ENCODE measurements at regions of chr15 and their contacts with region 1.

Region 1: DNA sequence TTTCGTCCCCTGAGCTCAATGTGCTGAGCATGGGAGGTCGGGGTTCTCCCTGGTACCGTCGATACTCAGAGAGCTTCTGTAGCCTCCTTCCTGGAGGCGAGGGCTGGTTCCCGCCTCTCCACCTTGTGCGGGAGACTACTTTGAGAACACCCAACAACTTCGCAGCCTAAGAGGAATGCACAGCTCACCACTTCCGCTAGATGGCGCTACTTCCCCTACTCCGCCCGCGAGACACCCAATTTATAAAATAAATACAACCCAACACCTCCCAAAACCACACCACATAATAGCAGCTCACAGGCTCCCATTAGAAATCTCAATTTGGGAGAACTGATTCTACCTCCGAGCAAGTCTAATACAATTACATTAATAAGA is 1.2 kb downstream of the RGMA start:
- DNase-seq: peak; percentile 43 to 84 (median 56)
- ATAC-seq: peak; percentile 78
- H3K4me3 ChIP-seq: peak overlapping the region; percentile 22
- H3K4me3 Mint-ChIP-seq: peak overlapping the region; percentile 87
- H3K27ac ChIP-seq: no peak overlapping the region
- H3K27ac Mint-ChIP-seq: no peak overlapping the region
- H3K4me1 ChIP-seq: peaks cover 18% of the 10 kb centered on the region
- H3K4me1 Mint-ChIP-seq: peaks cover 18% of the 10 kb centered on the region
- H3K27me3 ChIP-seq: peaks cover 36 to 70% of the 10 kb centered on the region in 2 experiments
- H3K27me3 Mint-ChIP-seq: peaks cover 80% of the 10 kb centered on the region
- CTCF ChIP-seq: peak; percentile 79

Region 2: GRCh38 chr15:93451265-93451664 is 363.5 kb after region 1 on chr15:
- CTCF ChIA-PET with region 1: no interaction called
- POLR2A ChIA-PET with region 1: no interaction called
- intact Hi-C with region 1: no loop called
- DNase-seq: no peak
- ATAC-seq: no peak
- H3K4me3 ChIP-seq: no peak overlapping the region
- H3K4me3 Mint-ChIP-seq: no peak overlapping the region
- H3K27ac ChIP-seq: no peak overlapping the region
- H3K27ac Mint-ChIP-seq: no peak overlapping the region
- H3K4me1 ChIP-seq: no peaks in the 10 kb centered on the region
- H3K4me1 Mint-ChIP-seq: no peaks in the 10 kb centered on the region
- H3K27me3 ChIP-seq: no peaks in the 10 kb centered on the region
- H3K27me3 Mint-ChIP-seq: no peaks in the 10 kb centered on the region
- CTCF ChIP-seq: no peak

Region 3: DNA sequence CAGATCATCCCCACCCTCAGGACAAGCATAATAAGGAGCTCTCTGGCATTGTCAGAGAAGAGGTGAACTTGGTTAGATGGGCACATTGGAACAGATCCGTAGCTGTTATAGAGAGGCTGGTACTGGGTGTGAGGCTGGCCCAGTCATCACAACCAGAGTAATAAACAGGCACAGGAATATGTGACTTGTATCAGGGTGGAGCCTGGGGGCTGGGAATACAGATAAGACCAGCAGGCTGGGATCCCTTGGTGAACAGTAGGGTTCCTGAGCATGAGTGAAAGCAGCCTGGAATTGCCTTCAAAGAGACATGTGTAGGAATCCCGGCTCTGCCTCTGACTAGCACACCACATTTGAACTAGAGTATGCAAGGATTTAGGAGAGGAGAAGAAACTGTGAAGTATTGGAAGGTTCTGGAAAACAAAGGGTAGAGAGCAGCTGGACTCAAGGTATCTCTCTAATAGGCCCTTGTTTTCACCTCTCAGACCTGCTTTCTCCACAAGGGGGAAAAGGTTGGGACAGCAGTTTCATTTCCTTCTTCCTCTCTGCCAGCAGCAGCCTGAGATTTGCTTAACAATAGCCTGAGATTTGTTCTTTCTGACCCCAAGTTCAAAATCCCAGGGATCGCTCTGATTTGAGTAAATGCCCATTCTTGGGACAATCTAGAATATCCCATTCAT is 712.8 kb after region 1 on chr15:
- CTCF ChIA-PET with region 1: no interaction called
- POLR2A ChIA-PET with region 1: no interaction called
- intact Hi-C with region 1: no loop called
- DNase-seq: no peak
- ATAC-seq: no peak
- H3K4me3 ChIP-seq: no peak overlapping the region
- H3K4me3 Mint-ChIP-seq: no peak overlapping the region
- H3K27ac ChIP-seq: no peak overlapping the region
- H3K27ac Mint-ChIP-seq: no peak overlapping the region
- H3K4me1 ChIP-seq: no peaks in the 10 kb centered on the region
- H3K4me1 Mint-ChIP-seq: no peaks in the 10 kb centered on the region
- H3K27me3 ChIP-seq: peaks cover 0 to 2% of the 10 kb centered on the region in 2 experiments
- H3K27me3 Mint-ChIP-seq: peaks cover 6% of the 10 kb centered on the region
- CTCF ChIP-seq: no peak

Region 4: DNA sequence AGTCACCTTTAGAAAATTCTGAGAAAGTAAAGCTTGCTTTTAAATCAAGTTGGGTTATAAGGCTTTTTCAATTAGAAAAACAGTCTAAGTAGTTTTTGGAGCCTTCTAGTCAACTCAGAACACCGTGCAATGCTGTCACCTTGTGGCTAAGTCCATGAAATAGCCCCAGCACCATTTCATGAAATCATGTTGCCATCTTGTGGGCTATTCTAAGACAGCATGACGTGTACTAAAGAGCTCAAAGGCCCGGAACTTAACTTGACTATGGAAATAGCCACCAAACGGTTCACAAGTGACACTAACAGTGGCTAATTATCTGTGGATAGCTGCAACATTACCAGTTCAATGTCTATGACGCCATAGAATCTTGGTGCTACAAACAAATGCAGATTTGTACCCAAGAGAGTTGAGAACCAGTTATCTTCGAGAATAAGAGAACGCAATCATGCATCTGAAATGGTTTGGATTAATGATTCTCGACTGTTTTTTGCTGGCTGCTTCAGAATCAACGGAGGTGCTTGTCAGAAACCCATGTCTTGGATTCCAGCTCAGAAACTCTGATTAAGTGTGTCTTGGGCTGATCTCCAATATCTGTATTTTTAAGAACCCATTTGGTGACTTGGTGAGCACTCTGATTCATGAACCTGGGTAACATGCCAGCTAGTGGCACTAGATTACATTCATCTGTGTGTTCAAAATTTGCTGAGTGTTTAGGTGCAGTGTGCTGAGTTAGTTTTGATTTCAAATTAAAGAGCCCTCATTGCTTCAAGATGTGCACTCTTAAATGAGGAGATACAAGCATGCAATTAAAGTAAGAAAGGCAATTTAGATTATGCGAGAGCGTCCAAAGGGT is 1032.3 kb after region 1 on chr15:
- CTCF ChIA-PET with region 1: interaction called, 3 read pairs
- POLR2A ChIA-PET with region 1: no interaction called
- intact Hi-C with region 1: loop called in 1 of 2 experiments (anchors 5 kb)
- DNase-seq: peak in 11 of 14 experiments; percentile 1 to 82 (median 21)
- ATAC-seq: peak; percentile 96
- H3K4me3 ChIP-seq: no peak overlapping the region
- H3K4me3 Mint-ChIP-seq: no peak overlapping the region
- H3K27ac ChIP-seq: no peak overlapping the region
- H3K27ac Mint-ChIP-seq: no peak overlapping the region
- H3K4me1 ChIP-seq: no peaks in the 10 kb centered on the region
- H3K4me1 Mint-ChIP-seq: no peaks in the 10 kb centered on the region
- H3K27me3 ChIP-seq: no peaks in the 10 kb centered on the region
- H3K27me3 Mint-ChIP-seq: peaks cover 2% of the 10 kb centered on the region
- CTCF ChIP-seq: peak; percentile 42